PC-9 (cell line): ENCODE measurements at regions of chr16 and their contacts with region 1.

Region 1: GRCh38 chr16:30551781-30552180 is 6.4 kb downstream of the ZNF764 start:
- DNase-seq: no peak
- H3K4me3 ChIP-seq: no peak overlapping the region
- H3K27ac ChIP-seq: no peak overlapping the region
- H3K4me1 ChIP-seq: peaks cover 2% of the 10 kb centered on the region; the same call in 1 of the 2 replicates
- H3K27me3 ChIP-seq: no peaks in the 10 kb centered on the region
- CTCF ChIP-seq: no peak

Region 2: DNA sequence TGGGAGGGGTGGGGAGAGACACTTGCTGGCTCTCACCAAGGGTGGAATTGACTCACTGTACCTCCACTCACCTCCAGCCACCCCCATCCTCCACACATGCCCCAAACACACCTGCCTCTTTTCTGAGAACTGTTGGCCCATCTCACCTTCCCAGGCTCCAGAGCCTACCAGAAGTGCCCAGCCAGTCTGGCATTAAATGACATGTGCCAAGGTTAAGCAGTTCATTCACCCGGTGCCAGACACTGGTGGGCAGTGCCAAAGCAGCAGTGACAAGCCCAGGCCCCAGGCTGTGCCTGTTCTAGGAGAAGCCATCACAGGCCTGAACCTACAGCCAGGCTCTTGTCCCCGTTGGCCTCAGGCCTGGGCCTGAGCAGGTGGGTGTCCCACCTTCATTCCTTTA is 720.3 kb before region 1 on chr16:
- CTCF ChIA-PET with region 1: interaction called, 16 read pairs
- POLR2A ChIA-PET with region 1: no interaction called
- intact Hi-C with region 1: no loop called
- DNase-seq: no peak
- H3K4me3 ChIP-seq: no peak overlapping the region
- H3K27ac ChIP-seq: no peak overlapping the region
- H3K4me1 ChIP-seq: no peaks in the 10 kb centered on the region
- H3K27me3 ChIP-seq: no peaks in the 10 kb centered on the region
- CTCF ChIP-seq: no peak

Region 3: GRCh38 chr16:30472328-30472942 is 79.3 kb before region 1 on chr16 and contains the start of gene ITGAL:
- CTCF ChIA-PET with region 1: no interaction called
- POLR2A ChIA-PET with region 1: no interaction called
- intact Hi-C with region 1: no loop called
- DNase-seq: no peak
- H3K4me3 ChIP-seq: no peak within 1 kb of the TSS
- H3K27ac ChIP-seq: no peak within 1 kb of the TSS
- H3K4me1 ChIP-seq: no peaks in the 10 kb centered on the region; the same call in 1 of the 2 replicates
- H3K27me3 ChIP-seq: peaks cover 14% of the 10 kb centered on the region; the same call in 1 of the 2 replicates
- CTCF ChIP-seq: no peak
- total RNA-seq, gene ITGAL: 0.50 TPM in 1 of 2 replicates, not detected in the other

Region 4: DNA sequence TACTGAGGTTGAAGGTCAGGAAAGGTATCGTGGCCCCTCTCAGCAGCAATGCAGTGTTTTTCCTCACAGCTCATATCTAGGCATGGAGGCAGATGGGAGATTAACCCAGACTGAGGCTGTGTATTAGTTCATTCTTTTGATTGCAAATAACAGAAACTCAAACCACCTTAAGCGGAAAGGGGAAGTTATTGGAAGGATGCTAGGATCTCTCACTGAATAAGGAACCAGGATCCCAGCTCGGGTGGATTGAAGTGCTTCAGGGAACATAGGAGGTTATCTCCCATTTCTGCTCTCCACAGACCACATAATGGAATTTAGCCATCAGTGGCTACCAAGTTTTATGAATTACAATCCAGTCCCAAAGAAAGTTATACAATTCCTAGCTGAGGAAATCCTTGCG is 50.2 kb after region 1 on chr16:
- CTCF ChIA-PET with region 1: no interaction called
- POLR2A ChIA-PET with region 1: no interaction called
- intact Hi-C with region 1: no loop called
- DNase-seq: no peak
- H3K4me3 ChIP-seq: no peak overlapping the region
- H3K27ac ChIP-seq: no peak overlapping the region
- H3K4me1 ChIP-seq: no peaks in the 10 kb centered on the region
- H3K27me3 ChIP-seq: no peaks in the 10 kb centered on the region
- CTCF ChIP-seq: no peak

Region 5: GRCh38 chr16:30692381-30693064 is 140.7 kb after region 1 on chr16:
- CTCF ChIA-PET with region 1: interaction called, 13 read pairs
- POLR2A ChIA-PET with region 1: no interaction called
- intact Hi-C with region 1: no loop called
- DNase-seq: no peak
- H3K4me3 ChIP-seq: no peak overlapping the region
- H3K27ac ChIP-seq: no peak overlapping the region
- H3K4me1 ChIP-seq: peaks cover 8% of the 10 kb centered on the region
- H3K27me3 ChIP-seq: no peaks in the 10 kb centered on the region
- CTCF ChIP-seq: no peak